Endothelial cell of umbilical vein (primary cell): ENCODE measurements at regions of chr9 and their contacts with region 1.

Region 1: DNA sequence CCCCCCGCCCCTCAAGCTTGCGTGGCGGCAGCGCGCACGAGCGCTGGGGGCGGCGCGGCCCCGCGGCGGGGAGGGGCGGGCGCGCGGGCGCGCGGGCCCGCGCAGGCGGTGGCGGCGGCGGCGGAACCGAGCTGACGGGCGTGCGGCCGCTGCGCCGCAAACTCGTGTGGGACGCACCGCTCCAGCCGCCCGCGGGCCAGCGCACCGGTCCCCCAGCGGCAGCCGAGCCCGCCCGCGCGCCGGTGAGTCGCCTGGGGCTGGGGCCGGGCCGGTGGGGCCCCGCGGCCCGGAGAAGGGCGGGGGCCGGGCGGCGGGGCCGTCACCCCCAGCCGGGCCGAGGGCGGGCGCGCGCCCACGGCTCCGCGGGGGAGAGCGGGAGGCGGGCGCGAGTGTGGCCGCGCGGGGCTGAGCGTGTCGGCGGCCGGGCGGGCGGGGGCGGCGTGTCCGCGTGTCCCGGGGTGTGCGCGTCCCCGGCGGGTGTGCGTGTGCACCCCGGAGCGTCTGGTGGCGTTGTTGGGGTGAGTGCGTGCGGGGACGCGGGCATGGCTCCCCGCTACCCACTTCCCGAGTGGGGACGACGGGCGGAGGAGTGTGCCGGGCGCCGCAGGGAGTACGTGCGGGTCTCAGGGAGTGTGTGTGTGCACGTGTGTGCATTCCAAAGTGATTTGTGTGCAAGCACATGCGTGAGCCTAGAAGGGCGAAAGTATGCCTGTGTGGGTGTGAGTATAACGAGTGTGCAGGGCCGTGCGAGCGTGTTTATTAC is at the start of gene NEK6:
- DNase-seq: peak; percentile 32
- H3K4me3 ChIP-seq: peak within 1 kb of the TSS; percentile 4 to 90 (median 70)
- H3K27ac ChIP-seq: peak within 1 kb of the TSS; percentile 76
- H3K4me1 ChIP-seq: peaks cover 38% of the 10 kb centered on the region
- H3K27me3 ChIP-seq: no peaks in the 10 kb centered on the region
- CTCF ChIP-seq: no peak
- POLR2A ChIP-seq: no peak
- total RNA-seq, gene NEK6: 65.9 and 67.1 TPM in 2 replicates

Region 2: DNA sequence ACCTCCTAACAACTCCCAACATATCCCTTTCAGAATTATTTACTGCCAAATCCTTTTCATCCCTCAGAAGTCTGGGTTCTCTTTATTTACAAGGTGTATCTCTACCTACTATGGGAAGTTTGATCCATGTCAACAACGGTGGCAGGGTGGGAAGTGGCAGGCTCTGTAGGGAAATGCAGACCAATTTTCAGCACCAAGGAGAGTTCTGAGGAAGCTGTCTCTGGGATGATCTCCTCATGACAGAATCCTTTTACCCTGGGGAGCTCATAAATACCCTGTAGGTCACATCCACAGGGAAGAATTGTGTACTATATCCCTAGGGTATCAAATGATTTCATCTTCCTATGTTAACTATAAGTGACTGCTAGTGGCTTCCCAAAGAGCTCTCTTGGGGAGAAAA is 108.0 kb before region 1 on chr9:
- CTCF ChIA-PET with region 1: no interaction called
- POLR2A ChIA-PET with region 1: no interaction called
- dilution Hi-C with region 1: no loop called
- intact Hi-C with region 1: loop called (anchors 5 kb)
- DNase-seq: no peak
- H3K4me3 ChIP-seq: no peak overlapping the region
- H3K27ac ChIP-seq: no peak overlapping the region
- H3K4me1 ChIP-seq: peaks cover 4% of the 10 kb centered on the region
- H3K27me3 ChIP-seq: peaks cover 8 to 29% of the 10 kb centered on the region in 2 experiments
- CTCF ChIP-seq: no peak
- POLR2A ChIP-seq: no peak

Region 3: GRCh38 chr9:124180557-124180956 is 77.5 kb before region 1 on chr9:
- CTCF ChIA-PET with region 1: no interaction called
- POLR2A ChIA-PET with region 1: no interaction called
- dilution Hi-C with region 1: no loop called
- intact Hi-C with region 1: no loop called
- DNase-seq: peak; percentile 22
- H3K4me3 ChIP-seq: no peak overlapping the region
- H3K27ac ChIP-seq: no peak overlapping the region
- H3K4me1 ChIP-seq: no peaks in the 10 kb centered on the region
- H3K27me3 ChIP-seq: peaks cover 14 to 23% of the 10 kb centered on the region in 2 experiments
- CTCF ChIP-seq: no peak
- POLR2A ChIP-seq: no peak

Region 4: DNA sequence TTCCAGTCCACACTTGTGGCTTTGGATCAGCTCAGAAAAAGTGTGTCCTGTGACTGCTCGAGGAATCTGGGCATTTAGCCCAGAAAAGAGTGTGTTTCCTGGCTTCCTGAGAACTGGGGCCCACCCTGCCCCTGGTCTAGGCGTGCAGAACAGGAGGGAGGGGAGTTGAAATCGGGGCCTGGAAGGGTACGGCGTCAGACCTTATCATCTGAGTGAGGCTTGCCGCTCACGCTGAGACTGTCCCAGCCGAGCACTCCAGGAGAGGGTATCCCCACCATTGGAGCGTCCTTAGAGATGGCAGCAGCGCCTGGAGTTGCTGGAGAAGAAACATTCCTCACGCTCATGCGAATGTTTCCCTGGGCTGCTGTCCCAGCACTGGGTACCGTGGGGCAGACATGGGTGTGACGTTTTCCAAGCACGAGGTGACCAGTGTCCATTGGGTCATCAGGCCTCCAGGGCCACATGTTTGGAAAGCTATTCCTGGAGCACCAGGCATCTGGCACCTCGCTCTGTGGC is 22.2 kb after region 1 on chr9:
- CTCF ChIA-PET with region 1: interaction called, 9 read pairs
- POLR2A ChIA-PET with region 1: no interaction called
- dilution Hi-C with region 1: no loop called
- intact Hi-C with region 1: loop called (anchors 1 kb)
- DNase-seq: peak; percentile 94
- H3K4me3 ChIP-seq: no peak overlapping the region
- H3K27ac ChIP-seq: peak overlapping the region; percentile 92
- H3K4me1 ChIP-seq: peaks cover 62% of the 10 kb centered on the region
- H3K27me3 ChIP-seq: no peaks in the 10 kb centered on the region
- CTCF ChIP-seq: no peak
- POLR2A ChIP-seq: peak; percentile 26

Region 5: DNA sequence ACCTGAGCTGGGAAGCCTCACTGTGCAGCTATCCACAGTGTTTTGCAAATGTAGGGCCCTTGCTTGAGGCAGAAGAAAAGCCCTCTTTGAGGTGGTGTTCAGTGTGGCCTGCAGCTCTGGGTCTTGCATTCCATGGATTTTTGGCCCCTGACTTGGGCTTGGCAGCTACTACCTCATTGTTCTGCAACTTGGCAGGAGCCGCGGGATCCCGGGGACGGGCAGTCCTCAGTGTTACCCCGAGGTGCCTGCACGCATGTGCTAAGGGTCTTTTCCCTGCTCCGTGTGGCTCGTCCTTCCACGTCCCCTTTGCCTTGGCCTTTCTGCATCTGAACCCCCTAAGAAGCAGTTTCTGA is 39.5 kb after region 1 on chr9:
- CTCF ChIA-PET with region 1: no interaction called
- POLR2A ChIA-PET with region 1: no interaction called
- dilution Hi-C with region 1: no loop called
- intact Hi-C with region 1: loop called (anchors 1 kb)
- DNase-seq: peak; percentile 95
- H3K4me3 ChIP-seq: no peak overlapping the region
- H3K27ac ChIP-seq: peak overlapping the region; percentile 71
- H3K4me1 ChIP-seq: peaks cover 70% of the 10 kb centered on the region
- H3K27me3 ChIP-seq: no peaks in the 10 kb centered on the region
- CTCF ChIP-seq: no peak
- POLR2A ChIP-seq: peak; percentile 68

Region 6: GRCh38 chr9:124392871-124393460 is 134.9 kb after region 1 on chr9:
- CTCF ChIA-PET with region 1: no interaction called
- POLR2A ChIA-PET with region 1: no interaction called
- dilution Hi-C with region 1: no loop called
- intact Hi-C with region 1: loop called (anchors 5 kb)
- DNase-seq: peak; percentile 75
- H3K4me3 ChIP-seq: no peak overlapping the region
- H3K27ac ChIP-seq: peak overlapping the region; percentile 54
- H3K4me1 ChIP-seq: peaks cover 34% of the 10 kb centered on the region
- H3K27me3 ChIP-seq: no peaks in the 10 kb centered on the region
- CTCF ChIP-seq: peak; percentile 29 to 55
- POLR2A ChIP-seq: no peak